HepG2 (cell line): ENCODE measurements at regions of chr7 and their contacts with region 1.

Region 1: GRCh38 chr7:100101016-100101862 is at the starts of genes AP4M1 and MCM7:
- DNase-seq: peak; percentile 97
- ATAC-seq: peak; percentile 90
- H3K4me3 ChIP-seq: peak within 1 kb of the TSS; percentile 85 to 99 (median 86)
- H3K27ac ChIP-seq: peak within 1 kb of the TSS; percentile 95
- H3K4me1 ChIP-seq: peaks cover 22% of the 10 kb centered on the region
- H3K27me3 ChIP-seq: no peaks in the 10 kb centered on the region
- CTCF ChIP-seq: no peak
- EP300 ChIP-seq: peak in 1 of 2 experiments; percentile 23; a peak in 2 of 4 replicates
- POLR2A ChIP-seq: peak; percentile 57 to 72; a peak in 3 of 4 replicates
- RAD21 ChIP-seq: no peak
- total RNA-seq, gene AP4M1: 8.2 and 9.7 TPM in 2 replicates
- total RNA-seq, gene MCM7: 214 and 229 TPM in 2 replicates

Region 2: DNA sequence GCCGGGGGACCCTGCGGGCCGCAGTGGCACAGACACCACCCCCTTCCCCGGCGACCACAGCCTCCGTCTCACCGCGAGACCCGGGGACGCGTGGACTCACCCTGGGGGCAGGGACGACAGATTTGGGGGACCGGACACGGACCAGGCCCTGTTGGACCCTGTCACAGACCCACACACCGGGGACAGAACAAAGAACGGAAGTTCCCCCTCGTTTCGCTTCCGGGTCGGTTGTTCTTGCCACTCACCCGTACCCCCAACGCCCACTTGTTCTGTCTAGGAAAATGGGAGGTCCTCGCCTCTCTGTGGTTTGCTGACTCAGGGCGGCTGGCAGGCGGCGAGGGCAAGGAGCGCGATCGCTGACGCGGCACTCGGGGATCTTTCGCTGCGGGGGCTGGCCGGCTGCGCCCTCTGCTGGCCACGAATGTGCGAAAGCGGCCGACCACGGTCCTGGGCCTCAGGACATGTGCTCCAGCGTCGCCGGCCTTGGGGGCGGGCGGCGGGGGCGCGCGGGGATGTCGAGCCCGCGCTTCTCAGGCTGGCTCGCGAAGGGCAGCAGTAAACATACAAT is 19.6 kb before region 1 on chr7 and contains the start of gene ZNF3:
- CTCF ChIA-PET with region 1: no interaction called
- POLR2A ChIA-PET with region 1: interaction called, 12 read pairs
- in situ Hi-C with region 1: no loop called
- intact Hi-C with region 1: no loop called
- DNase-seq: peak; percentile 98
- ATAC-seq: peak; percentile 85
- H3K4me3 ChIP-seq: peak within 1 kb of the TSS; percentile 91 to 99 (median 92)
- H3K27ac ChIP-seq: peak within 1 kb of the TSS; percentile 96
- H3K4me1 ChIP-seq: peaks cover 44% of the 10 kb centered on the region
- H3K27me3 ChIP-seq: no peaks in the 10 kb centered on the region; a peak in 1 of 5 replicates
- CTCF ChIP-seq: peak; percentile 98
- EP300 ChIP-seq: peak in 1 of 2 experiments; percentile 46; a peak in 2 of 4 replicates
- POLR2A ChIP-seq: peak; percentile 87 to 91
- RAD21 ChIP-seq: peak; percentile 90
- total RNA-seq, gene ZNF3: 53.2 and 56.9 TPM in 2 replicates

Region 3: DNA sequence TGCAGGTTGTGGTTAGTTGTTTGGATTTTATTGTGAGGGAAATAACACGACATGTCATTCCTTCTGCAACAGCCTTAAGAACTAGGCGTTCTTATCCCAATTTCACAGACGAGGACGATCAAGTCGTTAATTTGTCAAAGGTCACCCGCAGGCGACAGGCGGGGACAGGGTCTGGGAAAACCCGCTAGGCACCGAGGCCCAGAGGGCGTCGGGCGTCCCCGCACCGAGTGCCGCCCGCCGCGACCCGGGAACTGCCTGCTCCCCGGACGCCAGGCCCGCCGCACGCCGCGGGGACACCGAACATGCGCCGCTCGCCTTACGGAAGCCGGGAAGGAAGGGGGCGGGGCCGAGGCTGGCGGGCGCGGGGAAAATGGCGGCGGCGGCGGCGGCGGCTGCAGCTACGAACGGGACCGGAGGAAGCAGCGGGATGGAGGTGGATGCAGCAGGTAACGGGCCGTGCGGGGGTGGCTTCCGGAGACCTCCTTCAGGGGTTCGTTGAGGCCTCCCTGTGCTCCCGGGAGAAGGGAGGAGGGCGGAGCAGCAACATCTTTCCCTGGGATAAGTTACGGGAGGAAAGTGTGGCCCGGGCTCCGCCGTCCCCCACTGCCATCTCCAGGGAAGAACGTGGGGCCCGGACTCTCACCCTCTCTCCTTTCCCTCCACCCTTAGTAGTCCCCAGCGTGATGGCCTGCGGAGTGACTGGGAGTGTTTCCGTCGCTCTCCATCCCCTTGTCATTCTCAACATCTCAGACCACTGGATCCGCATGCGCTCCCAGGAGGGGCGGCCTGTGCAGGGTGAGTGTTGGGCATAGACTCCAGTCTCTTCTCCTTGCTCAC is 12.4 kb before region 1 on chr7 and contains the start of gene COPS6:
- CTCF ChIA-PET with region 1: no interaction called
- POLR2A ChIA-PET with region 1: interaction called, 33 read pairs
- in situ Hi-C with region 1: no loop called
- intact Hi-C with region 1: no loop called
- DNase-seq: peak; percentile 49
- ATAC-seq: peak; percentile 58
- H3K4me3 ChIP-seq: peak within 1 kb of the TSS; percentile 83 to 97 (median 84)
- H3K27ac ChIP-seq: peak within 1 kb of the TSS; percentile 74
- H3K4me1 ChIP-seq: peaks cover 36% of the 10 kb centered on the region
- H3K27me3 ChIP-seq: no peaks in the 10 kb centered on the region; a peak in 1 of 5 replicates
- CTCF ChIP-seq: no peak
- EP300 ChIP-seq: no peak
- POLR2A ChIP-seq: peak; percentile 78 to 93
- RAD21 ChIP-seq: peak; percentile 50; the same call in 1 of the 2 replicates
- total RNA-seq, gene COPS6: 33.4 and 64.4 TPM in 2 replicates

Region 4: DNA sequence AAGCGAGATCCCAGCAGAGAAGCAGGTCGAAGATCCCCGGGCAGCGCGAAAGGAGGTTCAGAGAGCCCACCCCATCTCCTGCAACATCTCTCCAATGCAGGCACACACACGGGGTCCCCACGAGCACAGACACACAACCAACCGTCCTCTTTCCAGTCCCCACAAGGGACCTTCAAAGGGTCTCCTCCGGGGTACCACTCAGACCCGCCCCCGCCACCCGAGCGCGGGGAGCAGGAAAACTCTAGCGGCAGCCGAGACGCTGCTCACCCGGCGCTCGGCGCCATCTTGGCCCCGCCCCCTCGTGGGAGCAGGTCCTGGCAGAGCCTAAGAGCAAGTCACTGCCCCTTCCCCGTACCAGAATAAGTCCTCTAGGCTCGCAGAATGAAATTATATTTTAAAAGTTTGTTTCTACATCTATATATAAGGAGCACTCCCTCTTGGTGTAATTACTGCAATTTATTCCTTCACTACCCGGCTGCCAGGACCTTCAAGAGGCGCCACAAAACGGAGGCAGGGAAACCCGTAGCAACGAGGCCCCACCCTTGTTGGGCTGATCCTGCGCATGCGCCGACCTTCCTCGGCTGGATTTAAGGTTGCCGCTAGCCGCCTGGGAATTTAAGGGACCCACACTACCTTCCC is 17.9 kb after region 1 on chr7 and contains the starts of genes CNPY4 and TAF6:
- CTCF ChIA-PET with region 1: no interaction called
- POLR2A ChIA-PET with region 1: interaction called, 48 read pairs
- in situ Hi-C with region 1: no loop called
- intact Hi-C with region 1: loop called (anchors 2 kb)
- DNase-seq: peak; percentile 89
- ATAC-seq: peak; percentile 66
- H3K4me3 ChIP-seq: peak within 1 kb of the TSS; percentile 72 to 98 (median 95)
- H3K27ac ChIP-seq: peak within 1 kb of the TSS; percentile 77
- H3K4me1 ChIP-seq: peaks cover 36% of the 10 kb centered on the region
- H3K27me3 ChIP-seq: no peaks in the 10 kb centered on the region; a peak in 1 of 5 replicates
- CTCF ChIP-seq: no peak
- EP300 ChIP-seq: peak in 1 of 2 experiments; percentile 100; a peak in 1 of 4 replicates
- POLR2A ChIP-seq: no peak; a peak in 1 of 4 replicates
- RAD21 ChIP-seq: no peak
- total RNA-seq, gene CNPY4: 5.4 and 12.7 TPM in 2 replicates
- total RNA-seq, gene TAF6: 18.8 and 25.6 TPM in 2 replicates

Region 5: GRCh38 chr7:100126931-100127865 is 26.0 kb after region 1 on chr7 and contains the start of gene MBLAC1:
- CTCF ChIA-PET with region 1: no interaction called
- POLR2A ChIA-PET with region 1: interaction called, 48 read pairs
- in situ Hi-C with region 1: no loop called
- intact Hi-C with region 1: no loop called
- DNase-seq: peak; percentile 79
- ATAC-seq: peak; percentile 56
- H3K4me3 ChIP-seq: peak within 1 kb of the TSS; percentile 74 to 92 (median 84)
- H3K27ac ChIP-seq: peak within 1 kb of the TSS; percentile 96
- H3K4me1 ChIP-seq: peaks cover 55% of the 10 kb centered on the region
- H3K27me3 ChIP-seq: no peaks in the 10 kb centered on the region
- CTCF ChIP-seq: 0 out of 2 replicates have a peak, but pooled peaks have one; percentile 7
- EP300 ChIP-seq: no peak
- POLR2A ChIP-seq: peak in 1 of 2 experiments; percentile 78; a peak in 2 of 4 replicates
- RAD21 ChIP-seq: no peak
- total RNA-seq, gene MBLAC1: 1.8 and 2.1 TPM in 2 replicates

Region 6: DNA sequence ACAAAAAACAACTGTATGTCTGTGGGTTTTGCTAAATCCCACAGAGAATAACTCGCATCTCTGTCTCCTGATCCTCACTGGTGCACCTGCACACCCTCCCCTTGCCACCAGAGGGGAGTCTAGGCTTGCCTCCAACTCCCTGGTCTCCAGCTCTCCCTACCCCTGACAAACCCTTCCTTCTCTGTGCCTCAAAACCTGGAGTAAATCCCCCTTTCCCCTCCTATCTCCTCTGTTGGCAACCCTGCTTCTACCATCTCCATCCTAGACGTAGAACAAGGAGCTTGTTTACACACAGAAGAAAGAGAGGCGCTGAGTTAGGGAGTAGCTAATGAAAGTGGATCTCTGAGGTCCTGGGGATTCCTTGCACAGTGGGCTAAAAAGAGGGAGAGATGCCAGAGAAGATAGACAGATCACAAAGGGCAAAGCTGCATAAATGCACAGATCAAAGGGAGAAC is 31.5 kb after region 1 on chr7:
- CTCF ChIA-PET with region 1: no interaction called
- POLR2A ChIA-PET with region 1: interaction called, 26 read pairs
- in situ Hi-C with region 1: no loop called
- intact Hi-C with region 1: no loop called
- DNase-seq: peak; percentile 57
- ATAC-seq: peak; percentile 83
- H3K4me3 ChIP-seq: no peak overlapping the region
- H3K27ac ChIP-seq: no peak overlapping the region
- H3K4me1 ChIP-seq: peaks cover 31% of the 10 kb centered on the region
- H3K27me3 ChIP-seq: no peaks in the 10 kb centered on the region
- CTCF ChIP-seq: peak; percentile 94
- EP300 ChIP-seq: no peak
- POLR2A ChIP-seq: no peak
- RAD21 ChIP-seq: peak; percentile 82

Region 7: GRCh38 chr7:100148559-100149350 is 47.5 kb after region 1 on chr7 and contains the start of gene LAMTOR4:
- CTCF ChIA-PET with region 1: no interaction called
- POLR2A ChIA-PET with region 1: interaction called, 11 read pairs
- in situ Hi-C with region 1: no loop called
- intact Hi-C with region 1: no loop called
- DNase-seq: peak; percentile 98
- ATAC-seq: peak; percentile 98
- H3K4me3 ChIP-seq: peak within 1 kb of the TSS; percentile 96 to 97 (median 97)
- H3K27ac ChIP-seq: peak within 1 kb of the TSS; percentile 46
- H3K4me1 ChIP-seq: peaks cover 45% of the 10 kb centered on the region
- H3K27me3 ChIP-seq: no peaks in the 10 kb centered on the region
- CTCF ChIP-seq: no peak
- EP300 ChIP-seq: no peak; a peak in 1 of 4 replicates
- POLR2A ChIP-seq: peak in 1 of 2 experiments; percentile 92
- RAD21 ChIP-seq: no peak
- total RNA-seq, gene LAMTOR4: 115 and 120 TPM in 2 replicates

Region 8: GRCh38 chr7:100208911-100209408 is 107.7 kb after region 1 on chr7:
- CTCF ChIA-PET with region 1: no interaction called
- POLR2A ChIA-PET with region 1: no interaction called
- in situ Hi-C with region 1: no loop called
- intact Hi-C with region 1: no loop called
- DNase-seq: no peak
- ATAC-seq: no peak
- H3K4me3 ChIP-seq: no peak overlapping the region
- H3K27ac ChIP-seq: no peak overlapping the region
- H3K4me1 ChIP-seq: peaks cover 28% of the 10 kb centered on the region
- H3K27me3 ChIP-seq: no peaks in the 10 kb centered on the region
- CTCF ChIP-seq: no peak
- EP300 ChIP-seq: no peak
- POLR2A ChIP-seq: no peak
- RAD21 ChIP-seq: no peak